Right ventricle myocardium inferior (tissue), 1 donor: ENCODE measurements at regions of chr5 and their contacts with region 1.

Region 1: DNA sequence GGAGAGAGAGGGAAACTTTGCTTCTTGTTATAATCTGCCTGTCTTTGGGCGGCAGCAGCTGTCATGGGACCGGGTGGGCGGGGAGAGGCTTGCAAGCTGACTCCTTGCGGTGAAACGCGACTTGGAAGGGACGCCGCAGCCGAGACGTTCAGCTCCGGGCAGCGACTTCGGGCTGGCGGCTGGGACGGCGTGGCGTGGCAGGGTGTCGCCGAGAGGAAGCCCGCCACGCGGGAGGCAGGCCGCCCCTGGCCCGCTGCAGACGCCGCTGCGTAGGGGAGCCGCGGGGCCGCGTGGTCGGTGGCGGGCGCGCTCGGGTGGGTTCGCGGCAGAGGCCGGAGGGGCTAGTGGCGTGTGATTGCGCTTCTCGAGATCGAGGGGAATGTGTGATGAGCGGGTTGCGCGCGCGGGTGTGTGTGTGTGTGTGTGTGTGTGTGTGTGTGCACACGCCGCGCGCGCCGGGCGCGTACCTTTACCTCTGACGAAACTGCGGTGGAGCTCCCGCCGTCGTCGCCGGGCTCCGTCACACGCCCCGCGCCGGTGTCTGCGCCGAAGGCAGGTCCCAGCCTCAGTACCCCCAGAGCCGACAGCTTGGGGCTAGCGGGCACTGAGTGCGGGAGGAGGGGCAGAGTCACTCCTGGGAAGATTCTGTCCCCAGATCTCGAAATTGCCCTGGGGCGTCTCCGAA is 1.7 kb downstream of the PPARGC1B start:
- DNase-seq: peak; percentile 79
- ATAC-seq: peak; percentile 80

Region 2: DNA sequence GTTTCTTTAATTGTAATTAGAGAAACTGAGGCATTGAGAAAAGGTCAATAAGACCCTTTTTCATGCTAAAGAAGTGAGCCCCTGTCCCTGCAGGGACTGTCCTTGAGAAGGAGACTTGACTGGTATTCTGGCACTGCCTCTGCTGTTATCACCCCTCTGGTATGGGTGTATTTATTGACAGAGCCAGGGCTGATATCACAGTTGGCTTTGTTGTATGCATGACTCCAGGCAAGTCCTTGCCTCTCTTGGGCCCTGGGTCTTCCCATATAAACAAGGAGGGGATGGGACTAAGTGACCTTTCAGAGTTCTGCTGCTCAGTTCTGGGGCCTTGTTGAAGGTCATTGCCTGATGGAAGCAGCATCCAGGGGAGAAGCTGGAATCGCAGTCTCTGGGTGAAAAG is 73.5 kb before region 1 on chr5:
- intact Hi-C with region 1: loop called (anchors 1 kb)
- DNase-seq: no peak
- ATAC-seq: peak; percentile 86

Region 3: GRCh38 chr5:149667084-149667828 is 64.5 kb before region 1 on chr5:
- intact Hi-C with region 1: loop called (anchors 2 kb)
- DNase-seq: no peak
- ATAC-seq: peak; percentile 53

Region 4: DNA sequence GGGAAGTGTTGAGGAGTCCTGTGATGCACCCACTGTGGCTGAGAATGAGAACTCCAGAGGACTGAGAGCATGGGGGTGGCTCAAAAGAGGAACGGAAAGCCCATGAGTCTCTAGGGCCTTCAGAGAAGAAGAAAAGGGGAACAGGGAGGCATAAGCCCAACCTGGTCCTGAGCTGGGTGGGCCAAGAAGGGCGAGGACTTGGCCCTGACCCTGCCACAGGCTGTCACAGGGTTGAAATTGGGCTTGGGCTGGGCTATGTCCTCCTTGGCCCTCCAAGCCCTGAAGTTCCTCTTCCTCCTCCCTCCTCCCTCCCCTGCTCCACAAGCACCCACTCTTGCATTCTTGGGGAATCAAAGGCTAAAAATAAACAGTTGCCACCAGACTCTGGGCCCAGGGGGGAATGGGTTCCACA is 51.0 kb before region 1 on chr5:
- intact Hi-C with region 1: loop called (anchors 5 kb)
- DNase-seq: peak; percentile 77
- ATAC-seq: peak; percentile 76

Region 5: DNA sequence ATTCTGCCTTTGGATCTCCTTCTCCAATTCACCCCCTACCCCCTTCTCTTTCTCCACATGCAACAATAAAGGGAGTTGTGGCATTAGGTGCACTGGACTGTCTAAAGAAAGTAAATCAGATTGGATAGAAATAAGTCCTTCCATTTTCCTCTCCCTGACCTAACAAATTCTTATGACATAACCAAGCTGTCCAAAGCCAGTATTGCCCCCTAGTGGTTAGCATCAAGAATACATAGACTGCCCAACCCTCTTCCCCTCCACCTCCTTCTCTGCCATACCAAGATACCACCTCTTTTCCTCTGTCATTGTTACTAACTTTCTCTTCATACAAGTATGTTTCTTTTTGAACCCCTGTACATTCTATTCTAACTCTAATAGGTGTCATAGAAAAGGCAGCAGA is 44.0 kb after region 1 on chr5:
- intact Hi-C with region 1: loop called (anchors 5 kb)
- DNase-seq: no peak
- ATAC-seq: no peak

Region 6: GRCh38 chr5:149828161-149828884 is 96.5 kb after region 1 on chr5:
- intact Hi-C with region 1: loop called (anchors 1 kb)
- DNase-seq: peak; percentile 84
- ATAC-seq: peak; percentile 66

Region 7: DNA sequence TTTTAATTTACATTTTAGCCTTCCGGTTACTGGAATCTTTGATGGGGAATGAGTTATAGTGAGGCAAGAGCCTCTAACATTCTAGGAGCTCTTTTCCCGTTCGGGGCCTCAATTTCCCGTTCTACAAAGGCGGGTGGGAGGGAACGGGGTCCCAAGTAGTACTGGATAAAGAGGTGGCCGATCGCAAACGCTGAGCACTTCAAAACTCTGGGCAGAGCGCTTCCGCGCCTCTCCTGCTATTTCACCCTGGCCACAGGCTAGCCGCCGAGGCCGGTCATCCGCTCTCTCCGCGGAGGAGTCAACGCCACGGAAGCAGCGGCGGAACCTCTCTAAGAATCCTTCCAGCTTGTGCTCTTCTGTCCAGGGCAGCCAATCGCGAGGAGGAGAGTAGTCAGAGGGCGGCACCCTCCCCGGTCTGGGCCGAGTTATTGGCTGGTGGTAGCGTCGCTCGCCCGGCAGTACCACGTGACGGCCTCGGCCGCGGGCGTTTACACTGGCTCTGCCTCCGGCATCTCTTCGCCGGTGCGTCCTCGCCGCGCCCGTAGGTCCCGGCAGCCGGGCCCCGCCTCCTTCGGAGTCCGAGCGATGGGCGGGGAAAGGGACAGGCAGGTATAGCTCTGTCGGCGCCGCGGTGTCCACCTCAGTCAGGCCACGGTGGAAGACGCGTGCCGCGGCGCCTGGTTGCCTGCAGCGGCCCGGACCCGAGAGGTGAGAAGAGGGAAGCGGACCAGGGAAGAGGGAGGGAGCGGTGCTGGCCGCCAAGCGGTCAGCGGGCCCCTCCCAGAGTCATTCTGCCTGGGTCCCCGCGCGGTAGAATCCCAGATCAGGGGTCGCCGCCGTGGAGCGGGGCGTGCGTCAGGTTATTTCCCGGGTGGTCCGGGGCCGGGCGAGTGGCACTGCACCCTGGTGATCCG is 228.7 kb after region 1 on chr5 and contains the start of gene SLC26A2:
- intact Hi-C with region 1: loop called (anchors 10 kb)
- DNase-seq: peak; percentile 98
- ATAC-seq: peak; percentile 100
- total RNA-seq, gene SLC26A2: 4.3 TPM

Region 8: GRCh38 chr5:150000256-150000989 is 268.6 kb after region 1 on chr5 and contains the starts of genes HMGXB3 and TIGD6:
- intact Hi-C with region 1: no loop called
- DNase-seq: peak; percentile 94
- ATAC-seq: peak; percentile 97
- total RNA-seq, gene HMGXB3: 14.6 TPM
- total RNA-seq, gene TIGD6: 2.4 TPM